ENCODE measurements at regions of chr20 and their contacts with region 1.

Region 1: GRCh38 chr20:35619196-35620095 is 3.8 kb downstream of the SPAG4 start:
- DNase-seq: peak; percentile 92
- ATAC-seq: peak; percentile 35
- H3K4me3 Mint-ChIP-seq: peak overlapping the region; percentile 89
- H3K27ac Mint-ChIP-seq: peak overlapping the region; percentile 83
- H3K4me1 Mint-ChIP-seq: peaks cover 41% of the 10 kb centered on the region
- H3K27me3 Mint-ChIP-seq: peaks cover 3% of the 10 kb centered on the region
- CTCF ChIP-seq: peak; percentile 45

Region 2: DNA sequence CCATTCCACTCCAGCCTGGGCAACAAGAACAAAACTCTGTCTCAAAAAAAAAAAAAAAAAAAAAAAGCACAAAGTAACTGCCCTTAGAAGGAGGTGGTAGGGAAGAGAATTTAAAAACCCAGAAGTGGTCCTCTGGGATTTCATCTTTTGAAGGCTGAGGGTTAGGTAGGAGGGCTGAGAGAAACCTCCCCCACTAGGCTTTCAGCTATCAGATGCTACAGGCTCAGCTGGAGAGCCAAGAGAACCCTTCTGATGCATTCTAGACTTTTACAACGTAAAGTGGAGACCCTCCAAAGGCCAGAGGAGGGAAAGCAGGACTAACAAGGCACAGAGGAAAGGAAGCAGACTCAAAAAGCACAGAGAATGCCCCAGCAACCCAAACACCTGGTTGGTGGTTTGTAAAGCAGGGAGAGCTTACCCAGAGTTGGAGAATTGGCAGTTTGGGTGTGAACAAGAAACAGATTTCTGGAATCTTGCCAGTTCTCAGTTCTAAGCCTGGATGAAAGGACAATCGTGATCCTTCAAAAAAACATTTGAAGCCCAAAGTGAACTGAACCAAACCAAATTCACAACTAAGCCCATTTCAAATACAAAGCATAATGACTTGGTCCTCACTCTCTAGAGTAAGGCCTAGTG is 27.0 kb before region 1 on chr20:
- CTCF ChIA-PET with region 1: no interaction called
- POLR2A ChIA-PET with region 1: no interaction called
- intact Hi-C with region 1: no loop called
- DNase-seq: no peak
- ATAC-seq: no peak
- H3K4me3 Mint-ChIP-seq: no peak overlapping the region
- H3K27ac Mint-ChIP-seq: no peak overlapping the region
- H3K4me1 Mint-ChIP-seq: no peaks in the 10 kb centered on the region
- H3K27me3 Mint-ChIP-seq: peaks cover 1% of the 10 kb centered on the region
- CTCF ChIP-seq: no peak

Region 3: GRCh38 chr20:35604449-35604747 is 15.0 kb before region 1 on chr20:
- CTCF ChIA-PET with region 1: interaction called, 13 read pairs
- POLR2A ChIA-PET with region 1: interaction called, 8 read pairs
- intact Hi-C with region 1: no loop called
- DNase-seq: peak; percentile 44
- ATAC-seq: no peak
- H3K4me3 Mint-ChIP-seq: no peak overlapping the region
- H3K27ac Mint-ChIP-seq: no peak overlapping the region
- H3K4me1 Mint-ChIP-seq: peaks cover 4% of the 10 kb centered on the region
- H3K27me3 Mint-ChIP-seq: peaks cover 23% of the 10 kb centered on the region
- CTCF ChIP-seq: peak; percentile 40

Region 4: GRCh38 chr20:35629427-35630145 is 10.1 kb after region 1 on chr20:
- CTCF ChIA-PET with region 1: interaction called, 15 read pairs
- POLR2A ChIA-PET with region 1: interaction called, 4 read pairs
- intact Hi-C with region 1: no loop called
- DNase-seq: no peak
- ATAC-seq: no peak
- H3K4me3 Mint-ChIP-seq: no peak overlapping the region
- H3K27ac Mint-ChIP-seq: peak overlapping the region; percentile 47
- H3K4me1 Mint-ChIP-seq: no peaks in the 10 kb centered on the region
- H3K27me3 Mint-ChIP-seq: no peaks in the 10 kb centered on the region
- CTCF ChIP-seq: no peak

Region 5: GRCh38 chr20:35648836-35649235 is 29.4 kb after region 1 on chr20:
- CTCF ChIA-PET with region 1: interaction called, 8 read pairs
- POLR2A ChIA-PET with region 1: interaction called, 15 read pairs
- intact Hi-C with region 1: no loop called
- DNase-seq: no peak
- ATAC-seq: no peak
- H3K4me3 Mint-ChIP-seq: no peak overlapping the region
- H3K27ac Mint-ChIP-seq: peak overlapping the region; percentile 32
- H3K4me1 Mint-ChIP-seq: peaks cover 71% of the 10 kb centered on the region
- H3K27me3 Mint-ChIP-seq: no peaks in the 10 kb centered on the region
- CTCF ChIP-seq: no peak

Region 6: DNA sequence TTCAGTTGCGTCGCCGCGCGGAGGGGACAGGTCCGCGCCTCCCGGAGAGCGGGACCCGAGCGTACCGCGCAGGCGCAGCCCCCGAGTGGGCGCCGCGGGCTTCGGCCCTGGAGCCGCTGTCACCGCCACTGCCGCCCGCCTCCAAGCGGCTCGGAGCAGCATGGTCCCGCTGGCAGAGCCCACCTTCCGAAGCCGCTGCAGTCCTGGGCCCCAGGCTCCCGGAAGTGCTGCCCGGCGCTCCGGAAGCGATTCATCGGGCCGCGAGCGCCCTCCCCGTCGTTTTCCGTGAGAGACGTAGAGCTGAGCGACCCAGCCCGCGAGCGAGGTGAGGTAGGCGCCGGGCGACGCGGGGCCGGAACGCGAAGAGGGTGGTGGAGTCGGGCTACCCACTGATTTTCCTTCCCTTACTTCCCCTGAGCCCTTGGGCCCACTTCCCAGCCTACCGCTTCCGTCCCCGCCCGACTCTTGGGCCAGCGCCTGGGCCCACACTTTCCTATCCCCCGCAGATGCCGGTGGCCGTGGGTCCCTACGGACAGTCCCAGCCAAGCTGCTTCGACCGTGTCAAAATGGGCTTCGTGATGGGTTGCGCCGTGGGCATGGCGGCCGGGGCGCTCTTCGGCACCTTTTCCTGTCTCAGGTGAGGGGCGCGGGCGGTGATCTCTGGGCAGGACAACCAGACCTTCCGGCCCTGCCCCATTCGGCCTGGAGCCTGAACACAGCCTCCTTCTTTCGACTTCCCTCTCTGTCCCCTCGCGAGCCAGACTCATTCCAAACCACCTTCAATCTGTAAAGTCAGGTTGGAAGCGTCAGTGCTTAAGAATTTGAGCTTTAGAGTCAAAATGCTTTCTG is 79.9 kb after region 1 on chr20 and contains the starts of genes NFS1 and ROMO1:
- CTCF ChIA-PET with region 1: interaction called, 3 read pairs
- POLR2A ChIA-PET with region 1: interaction called, 37 read pairs
- intact Hi-C with region 1: no loop called
- DNase-seq: peak; percentile 93
- ATAC-seq: peak; percentile 90
- H3K4me3 Mint-ChIP-seq: peak within 1 kb of the TSS; percentile 83
- H3K27ac Mint-ChIP-seq: peak within 1 kb of the TSS; percentile 97
- H3K4me1 Mint-ChIP-seq: peaks cover 33% of the 10 kb centered on the region
- H3K27me3 Mint-ChIP-seq: no peaks in the 10 kb centered on the region
- CTCF ChIP-seq: no peak
- total RNA-seq, gene NFS1: 39.7 to 40.8 TPM
- total RNA-seq, gene ROMO1: 146 to 148 TPM

Region 7: DNA sequence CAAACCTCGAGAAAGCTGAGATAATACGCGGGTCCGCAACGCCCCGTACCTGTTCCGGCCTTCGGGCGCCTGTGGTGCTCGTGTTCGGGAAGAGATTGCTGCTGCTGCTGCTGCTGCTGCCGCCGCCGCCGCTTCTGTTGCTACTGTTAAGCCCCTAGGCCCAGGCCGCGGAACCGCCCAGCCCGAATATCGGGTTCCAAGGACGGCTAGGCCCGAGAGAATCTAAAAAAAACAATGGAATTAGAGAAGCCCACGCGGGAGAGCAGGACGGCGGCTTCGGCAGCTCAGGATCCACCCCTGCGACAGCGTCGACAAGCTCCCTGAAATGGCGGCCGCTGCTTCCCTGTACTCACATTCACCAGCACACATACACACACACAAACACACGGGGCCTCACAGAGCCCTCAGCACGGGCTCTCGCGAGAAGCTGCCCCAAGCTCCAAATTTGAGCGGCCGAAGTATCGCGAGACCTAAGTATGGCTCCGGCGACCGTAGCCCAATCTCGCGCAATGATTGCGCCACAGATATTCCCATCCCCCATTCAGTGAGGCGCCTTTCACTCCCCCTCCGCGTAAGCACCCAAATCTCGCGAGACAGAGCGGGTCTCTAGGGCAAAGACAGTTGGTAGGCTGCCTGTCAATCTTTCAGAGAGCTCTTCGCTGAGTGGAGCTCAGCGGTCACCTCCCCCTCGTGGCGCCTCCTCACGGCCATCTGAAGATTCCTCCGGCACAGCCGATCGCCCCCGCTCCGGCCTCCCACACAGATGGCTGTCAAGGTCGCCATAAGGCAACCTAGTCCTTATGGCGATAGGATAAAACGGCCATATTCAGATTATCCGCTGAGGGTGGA is 122.7 kb after region 1 on chr20 and contains the start of gene RBM39:
- CTCF ChIA-PET with region 1: interaction called, 4 read pairs
- POLR2A ChIA-PET with region 1: interaction called, 28 read pairs
- intact Hi-C with region 1: loop called (anchors 5 kb)
- DNase-seq: peak; percentile 100
- ATAC-seq: peak; percentile 89
- H3K4me3 Mint-ChIP-seq: peak within 1 kb of the TSS; percentile 92
- H3K27ac Mint-ChIP-seq: peak within 1 kb of the TSS; percentile 99
- H3K4me1 Mint-ChIP-seq: peaks cover 38% of the 10 kb centered on the region
- H3K27me3 Mint-ChIP-seq: no peaks in the 10 kb centered on the region
- CTCF ChIP-seq: no peak
- total RNA-seq, gene RBM39: 317 to 321 TPM

Region 8: GRCh38 chr20:35954200-35954906 is 334.9 kb after region 1 on chr20 and contains the start of gene SCAND1:
- CTCF ChIA-PET with region 1: interaction called, 8 read pairs
- POLR2A ChIA-PET with region 1: interaction called, 7 read pairs
- intact Hi-C with region 1: loop called (anchors 10 kb)
- DNase-seq: peak; percentile 99
- ATAC-seq: peak; percentile 89
- H3K4me3 Mint-ChIP-seq: peak within 1 kb of the TSS; percentile 98
- H3K27ac Mint-ChIP-seq: peak within 1 kb of the TSS; percentile 100
- H3K4me1 Mint-ChIP-seq: peaks cover 16% of the 10 kb centered on the region
- H3K27me3 Mint-ChIP-seq: no peaks in the 10 kb centered on the region
- CTCF ChIP-seq: peak; percentile 93
- total RNA-seq, gene SCAND1: 46.4 to 49.2 TPM